A673 (cell line): ENCODE measurements at regions of chr10 and their contacts with region 1.

Region 1: GRCh38 chr10:90148116-90148855 is 446.9 kb downstream of the KIF20B start:
- DNase-seq: peak; percentile 19
- H3K4me3 ChIP-seq: no peak overlapping the region
- H3K27ac ChIP-seq: no peak overlapping the region
- H3K4me1 ChIP-seq: no peaks in the 10 kb centered on the region
- H3K27me3 ChIP-seq: no peaks in the 10 kb centered on the region
- CTCF ChIP-seq: peak; percentile 51

Region 2: DNA sequence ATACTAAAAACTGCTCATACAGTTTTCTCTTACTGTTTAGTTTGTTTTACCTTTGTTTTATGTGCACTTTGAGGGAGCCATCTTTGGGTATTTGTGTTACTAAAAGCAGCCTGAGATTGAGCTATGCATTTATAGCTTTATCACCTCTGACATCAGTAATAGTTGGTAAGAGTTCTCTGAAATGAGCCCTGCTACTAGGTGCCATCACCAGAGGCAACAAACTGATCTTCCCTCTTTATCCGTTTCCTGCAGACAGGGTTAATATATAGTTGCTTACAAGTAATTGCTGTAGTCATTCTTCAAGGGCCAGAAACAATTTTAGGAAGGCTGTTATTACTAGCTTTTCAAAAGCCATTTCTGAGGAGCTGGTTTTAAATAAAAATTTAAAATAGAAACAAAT is 397.8 kb before region 1 on chr10:
- CTCF ChIA-PET with region 1: no interaction called
- POLR2A ChIA-PET with region 1: no interaction called
- intact Hi-C with region 1: no loop called
- DNase-seq: no peak
- H3K4me3 ChIP-seq: no peak overlapping the region
- H3K27ac ChIP-seq: no peak overlapping the region
- H3K4me1 ChIP-seq: no peaks in the 10 kb centered on the region
- H3K27me3 ChIP-seq: no peaks in the 10 kb centered on the region
- CTCF ChIP-seq: no peak

Region 3: GRCh38 chr10:89946106-89946505 is 202.2 kb before region 1 on chr10:
- CTCF ChIA-PET with region 1: no interaction called
- POLR2A ChIA-PET with region 1: no interaction called
- intact Hi-C with region 1: no loop called
- DNase-seq: no peak
- H3K4me3 ChIP-seq: no peak overlapping the region
- H3K27ac ChIP-seq: no peak overlapping the region
- H3K4me1 ChIP-seq: no peaks in the 10 kb centered on the region
- H3K27me3 ChIP-seq: peaks cover 29% of the 10 kb centered on the region
- CTCF ChIP-seq: no peak

Region 4: GRCh38 chr10:90193240-90193985 is 45.1 kb after region 1 on chr10:
- CTCF ChIA-PET with region 1: no interaction called
- POLR2A ChIA-PET with region 1: no interaction called
- intact Hi-C with region 1: no loop called
- DNase-seq: no peak
- H3K4me3 ChIP-seq: no peak overlapping the region
- H3K27ac ChIP-seq: no peak overlapping the region
- H3K4me1 ChIP-seq: no peaks in the 10 kb centered on the region
- H3K27me3 ChIP-seq: peaks cover 18% of the 10 kb centered on the region
- CTCF ChIP-seq: no peak

Region 5: DNA sequence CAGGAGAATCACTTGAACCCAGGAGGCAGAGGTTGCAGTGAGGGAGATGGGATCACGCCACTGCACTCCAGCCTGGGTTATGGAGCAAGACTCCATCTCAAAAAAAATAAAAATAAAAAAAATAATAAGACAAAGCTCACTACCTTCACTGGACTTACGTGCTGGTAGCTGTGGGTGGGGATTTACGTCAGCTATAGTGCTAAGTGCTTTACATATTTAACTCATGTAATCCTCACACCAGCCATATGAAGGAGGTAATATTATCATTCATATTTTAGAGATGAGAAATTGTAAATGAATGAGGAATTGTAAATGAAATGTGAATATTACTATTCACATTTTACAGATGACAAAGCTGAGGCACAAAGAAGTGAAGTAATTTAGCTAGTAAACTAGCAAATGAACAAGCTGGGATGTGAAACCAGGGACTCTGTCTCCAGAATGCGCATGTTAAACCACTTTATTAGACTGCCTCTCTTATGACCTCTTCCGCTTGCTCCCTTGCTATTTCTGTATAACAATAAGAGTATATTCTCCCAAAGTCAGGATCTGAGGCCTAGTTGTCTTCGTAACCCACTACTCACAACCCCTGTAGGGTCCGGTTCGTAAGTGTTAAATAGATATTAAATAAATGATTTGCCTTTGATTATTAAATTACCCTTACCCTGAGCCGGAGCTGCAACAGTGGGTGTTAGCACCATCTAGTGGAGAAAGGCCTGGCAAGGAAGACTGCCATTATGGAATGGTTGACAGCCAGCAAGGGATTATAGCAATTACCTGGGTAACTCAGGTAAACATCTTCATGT is 639.3 kb after region 1 on chr10:
- CTCF ChIA-PET with region 1: no interaction called
- POLR2A ChIA-PET with region 1: no interaction called
- intact Hi-C with region 1: loop called (anchors 10 kb)
- DNase-seq: peak; percentile 40
- H3K4me3 ChIP-seq: no peak overlapping the region
- H3K27ac ChIP-seq: no peak overlapping the region
- H3K4me1 ChIP-seq: no peaks in the 10 kb centered on the region
- H3K27me3 ChIP-seq: peaks cover 80% of the 10 kb centered on the region
- CTCF ChIP-seq: peak; percentile 85